CD4-positive, alpha-beta T cell (primary cell): ENCODE measurements at regions of chr1 and their contacts with region 1.

Region 1: DNA sequence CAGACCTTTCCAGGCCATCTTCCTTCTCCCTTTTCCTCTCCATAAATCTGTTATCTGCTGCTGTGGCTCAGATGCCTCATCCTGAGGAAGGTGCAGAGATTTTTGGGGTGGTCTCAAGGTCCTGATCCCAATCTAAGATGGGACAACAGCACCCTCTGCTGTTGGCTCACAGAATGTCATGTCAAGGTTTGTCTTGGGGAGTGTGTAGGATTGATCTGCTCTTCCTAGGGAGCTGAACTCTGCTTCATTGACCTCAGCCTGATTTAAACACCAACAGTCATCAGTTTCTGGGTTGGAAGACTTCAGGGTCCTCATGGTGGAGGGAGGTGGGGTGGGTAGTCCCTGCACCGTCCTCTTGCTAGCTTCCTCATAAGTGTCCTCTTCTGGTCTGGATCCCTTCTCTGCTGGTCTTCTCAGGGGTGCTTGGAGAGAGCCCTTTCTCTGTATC is 62.8 kb upstream of the LAX1 start:
- DNase-seq: peak; percentile 42 to 83 (median 62)
- ATAC-seq: peak; percentile 74
- H3K4me3 ChIP-seq: no peak overlapping the region
- H3K4me3 Mint-ChIP-seq: no peak overlapping the region
- H3K27ac ChIP-seq: no peak overlapping the region
- H3K27ac Mint-ChIP-seq: peak overlapping the region; percentile 24
- H3K4me1 ChIP-seq: no peaks in the 10 kb centered on the region
- H3K4me1 Mint-ChIP-seq: peaks cover 15% of the 10 kb centered on the region
- H3K27me3 ChIP-seq: no peaks in the 10 kb centered on the region
- H3K27me3 Mint-ChIP-seq: no peaks in the 10 kb centered on the region
- CTCF ChIP-seq: peak; percentile 91

Region 2: GRCh38 chr1:203504397-203505250 is 197.5 kb before region 1 on chr1:
- CTCF ChIA-PET with region 1: interaction called, 17 read pairs
- POLR2A ChIA-PET with region 1: no interaction called
- intact Hi-C with region 1: loop called (anchors 1 kb)
- DNase-seq: peak; percentile 50 to 89 (median 72)
- ATAC-seq: peak; percentile 65
- H3K4me3 ChIP-seq: no peak overlapping the region
- H3K4me3 Mint-ChIP-seq: no peak overlapping the region
- H3K27ac ChIP-seq: no peak overlapping the region
- H3K27ac Mint-ChIP-seq: no peak overlapping the region
- H3K4me1 ChIP-seq: peaks cover 5% of the 10 kb centered on the region
- H3K4me1 Mint-ChIP-seq: peaks cover 6% of the 10 kb centered on the region
- H3K27me3 ChIP-seq: no peaks in the 10 kb centered on the region
- H3K27me3 Mint-ChIP-seq: no peaks in the 10 kb centered on the region
- CTCF ChIP-seq: peak; percentile 81

Region 3: DNA sequence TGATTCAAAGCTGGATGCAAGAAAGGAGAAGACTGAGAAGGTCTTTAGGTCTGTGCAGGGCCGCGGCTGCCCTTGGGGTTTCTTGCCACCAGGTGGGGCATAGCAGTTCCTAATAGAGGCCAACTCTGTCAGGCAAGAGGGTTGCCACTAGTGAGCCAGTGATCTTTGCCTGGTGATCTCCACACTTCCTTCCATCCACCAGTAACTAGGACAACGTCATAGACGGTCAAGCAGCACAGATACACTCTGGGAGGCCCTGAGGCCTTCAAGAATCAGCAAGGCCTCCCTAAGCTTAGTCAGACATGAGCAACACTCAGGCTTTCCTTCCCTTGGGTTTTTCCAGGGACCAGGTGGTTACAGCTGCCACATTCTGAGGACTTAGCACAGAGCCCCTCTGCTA is 108.4 kb before region 1 on chr1:
- CTCF ChIA-PET with region 1: interaction called, 14 read pairs
- POLR2A ChIA-PET with region 1: no interaction called
- intact Hi-C with region 1: loop called (anchors 1 kb)
- DNase-seq: peak; percentile 35 to 75 (median 64)
- ATAC-seq: peak; percentile 85
- H3K4me3 ChIP-seq: no peak overlapping the region
- H3K4me3 Mint-ChIP-seq: no peak overlapping the region
- H3K27ac ChIP-seq: no peak overlapping the region
- H3K27ac Mint-ChIP-seq: no peak overlapping the region
- H3K4me1 ChIP-seq: peaks cover 9% of the 10 kb centered on the region
- H3K4me1 Mint-ChIP-seq: peaks cover 5% of the 10 kb centered on the region
- H3K27me3 ChIP-seq: no peaks in the 10 kb centered on the region
- H3K27me3 Mint-ChIP-seq: no peaks in the 10 kb centered on the region
- CTCF ChIP-seq: peak; percentile 52

Region 4: GRCh38 chr1:204128964-204129896 is 427.1 kb after region 1 on chr1:
- CTCF ChIA-PET with region 1: no interaction called
- POLR2A ChIA-PET with region 1: no interaction called
- intact Hi-C with region 1: loop called in 1 of 2 experiments (anchors 5 kb)
- DNase-seq: peak; percentile 27 to 85 (median 42)
- ATAC-seq: peak; percentile 87
- H3K4me3 ChIP-seq: no peak overlapping the region
- H3K4me3 Mint-ChIP-seq: no peak overlapping the region
- H3K27ac ChIP-seq: no peak overlapping the region
- H3K27ac Mint-ChIP-seq: no peak overlapping the region
- H3K4me1 ChIP-seq: peaks cover 11% of the 10 kb centered on the region
- H3K4me1 Mint-ChIP-seq: peaks cover 9% of the 10 kb centered on the region
- H3K27me3 ChIP-seq: no peaks in the 10 kb centered on the region
- H3K27me3 Mint-ChIP-seq: no peaks in the 10 kb centered on the region
- CTCF ChIP-seq: peak; percentile 87

Region 5: DNA sequence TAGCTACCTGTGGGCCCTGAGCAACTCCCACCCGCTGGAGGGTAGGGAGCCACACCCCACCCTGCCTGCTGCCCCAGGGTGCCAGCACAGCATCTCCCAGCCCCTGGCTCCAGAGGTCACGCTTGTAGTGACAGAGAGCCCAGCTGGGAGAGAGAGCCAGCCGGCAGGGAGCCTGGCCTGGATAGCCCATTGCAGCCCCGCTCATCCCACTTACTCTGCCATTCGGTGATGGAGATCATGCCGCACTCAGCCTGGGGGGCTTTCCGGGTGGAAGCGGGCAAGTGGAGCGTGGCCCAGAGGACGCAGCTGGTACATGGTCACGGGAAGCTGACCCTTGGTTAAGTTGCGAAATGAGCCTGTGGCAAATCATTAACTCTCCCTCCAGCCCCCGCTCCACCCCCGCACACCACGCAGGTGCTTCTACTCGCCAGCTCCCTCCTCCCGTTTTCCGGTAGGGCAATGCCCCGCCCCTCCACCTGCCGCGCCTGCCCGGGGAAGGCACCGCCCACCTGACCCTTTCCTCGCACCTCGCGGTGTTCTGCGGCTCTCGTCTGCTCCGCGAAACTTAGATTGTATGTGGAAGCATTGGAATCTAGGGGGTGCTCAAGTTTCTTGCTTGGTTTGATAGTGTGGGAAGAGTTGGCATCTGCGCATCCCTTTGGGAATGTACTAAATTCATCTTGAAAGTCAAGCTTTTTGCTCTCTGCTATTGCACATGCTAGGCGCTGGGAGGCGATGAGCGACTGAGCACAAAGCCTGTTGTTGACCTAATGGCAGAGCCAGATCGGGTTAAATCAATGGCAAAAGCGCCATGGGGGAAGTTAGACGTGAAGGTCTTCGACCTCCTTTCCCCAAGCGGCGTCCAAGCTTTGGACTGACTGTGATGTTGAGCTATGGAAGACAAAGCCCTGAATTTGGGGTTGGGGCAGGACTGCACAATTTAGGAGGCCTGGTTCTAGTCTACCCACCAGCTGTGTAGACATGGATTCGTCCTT is 511.8 kb after region 1 on chr1 and contains the start of gene GOLT1A:
- CTCF ChIA-PET with region 1: no interaction called
- POLR2A ChIA-PET with region 1: no interaction called
- intact Hi-C with region 1: no loop called
- DNase-seq: peak; percentile 9 to 66 (median 41)
- ATAC-seq: peak; percentile 96
- H3K4me3 ChIP-seq: peak within 1 kb of the TSS; percentile 46
- H3K4me3 Mint-ChIP-seq: peak within 1 kb of the TSS; percentile 52
- H3K27ac ChIP-seq: no peak within 1 kb of the TSS
- H3K27ac Mint-ChIP-seq: no peak within 1 kb of the TSS
- H3K4me1 ChIP-seq: peaks cover 11% of the 10 kb centered on the region
- H3K4me1 Mint-ChIP-seq: peaks cover 8% of the 10 kb centered on the region
- H3K27me3 ChIP-seq: peaks cover 3 to 9% of the 10 kb centered on the region in 2 experiments
- H3K27me3 Mint-ChIP-seq: no peaks in the 10 kb centered on the region
- CTCF ChIP-seq: no peak
- total RNA-seq, gene GOLT1A: 0.30 TPM in 1 of 2 experiments, not detected in the other

Region 6: DNA sequence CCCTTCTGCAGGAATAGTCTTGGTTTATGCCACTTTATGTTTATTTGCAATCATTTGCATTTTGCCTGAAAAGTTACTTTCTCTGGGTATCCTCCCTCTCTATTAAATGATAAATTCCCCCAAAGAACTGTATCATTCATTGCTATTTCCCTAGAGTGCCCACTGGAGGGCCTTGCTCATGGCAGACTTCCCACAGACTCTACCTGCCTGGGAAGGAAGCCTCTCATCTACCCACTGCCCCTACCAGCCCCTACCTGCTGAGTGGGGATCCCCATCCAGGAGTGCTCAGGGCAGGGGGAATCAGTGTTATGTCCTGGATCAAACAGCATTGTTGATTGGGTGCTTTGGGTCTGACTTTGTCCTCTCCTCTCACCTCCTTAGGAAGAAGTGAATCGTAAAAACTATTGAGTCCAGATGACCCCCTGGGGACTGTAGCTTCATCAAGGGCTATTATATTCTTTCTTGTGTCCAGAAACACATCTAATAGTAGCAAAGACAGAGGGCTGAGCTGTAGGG is 990.2 kb after region 1 on chr1:
- CTCF ChIA-PET with region 1: no interaction called
- POLR2A ChIA-PET with region 1: no interaction called
- intact Hi-C with region 1: no loop called
- DNase-seq: no peak
- ATAC-seq: no peak
- H3K4me3 ChIP-seq: no peak overlapping the region
- H3K4me3 Mint-ChIP-seq: no peak overlapping the region
- H3K27ac ChIP-seq: no peak overlapping the region
- H3K27ac Mint-ChIP-seq: no peak overlapping the region
- H3K4me1 ChIP-seq: no peaks in the 10 kb centered on the region
- H3K4me1 Mint-ChIP-seq: no peaks in the 10 kb centered on the region
- H3K27me3 ChIP-seq: peaks cover 0 to 8% of the 10 kb centered on the region in 2 experiments
- H3K27me3 Mint-ChIP-seq: peaks cover 20% of the 10 kb centered on the region
- CTCF ChIP-seq: no peak